Ascending aorta (tissue), 2 donors: ENCODE measurements at regions of chr10 and their contacts with region 1.

Region 1: DNA sequence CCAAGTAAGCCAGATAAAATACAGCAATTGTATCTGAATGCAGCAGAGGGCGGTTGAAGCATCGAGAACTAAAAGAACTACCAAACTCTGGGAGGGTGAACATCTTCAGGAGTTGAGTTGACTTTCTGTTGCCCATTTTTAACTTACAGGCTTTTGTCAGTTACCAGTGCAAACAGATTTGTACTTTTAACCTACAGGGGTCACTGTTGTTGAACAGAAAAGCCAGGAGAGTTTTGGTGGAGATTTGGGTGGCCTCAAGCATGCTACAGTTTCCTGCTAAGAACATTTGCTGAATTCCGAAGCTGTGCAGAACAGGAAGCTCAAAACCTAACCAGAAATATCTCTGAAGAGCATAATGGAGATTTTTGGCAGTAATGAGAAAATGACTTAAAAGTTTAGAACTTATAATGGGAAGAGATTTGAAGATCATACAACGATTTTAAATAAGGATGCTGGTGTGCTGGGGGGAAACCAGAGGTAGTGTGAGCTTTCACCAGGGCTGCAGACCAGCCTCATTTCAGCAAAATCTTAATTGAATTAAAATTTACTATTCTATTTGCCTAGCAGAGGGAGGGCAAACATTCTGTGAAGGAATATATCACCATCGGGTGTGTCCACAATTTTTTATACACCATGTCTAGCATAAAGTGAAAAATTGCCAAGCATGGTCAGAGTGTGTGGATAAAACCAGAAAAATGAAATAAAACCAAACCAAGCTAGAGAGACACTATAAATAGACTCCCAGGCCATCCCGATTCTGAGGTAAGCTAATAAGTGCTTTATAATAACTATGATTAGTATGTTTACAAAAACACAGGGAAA is 208.6 kb upstream of the CCDC6 start:
- DNase-seq: no peak
- H3K4me3 ChIP-seq: no peak overlapping the region
- H3K27ac ChIP-seq: no peak overlapping the region
- H3K4me1 ChIP-seq: peaks cover 0 to 4% of the 10 kb centered on the region in 2 donors
- H3K27me3 ChIP-seq: no peaks in the 10 kb centered on the region
- CTCF ChIP-seq: peak; percentile 33 to 63 (median 43)

Region 2: GRCh38 chr10:59991661-59992060 is 123.3 kb before region 1 on chr10:
- intact Hi-C with region 1: no loop called
- DNase-seq: peak in 1 of 2 donors; percentile 11
- H3K4me3 ChIP-seq: no peak overlapping the region
- H3K27ac ChIP-seq: no peak overlapping the region
- H3K4me1 ChIP-seq: no peaks in the 10 kb centered on the region
- H3K27me3 ChIP-seq: no peaks in the 10 kb centered on the region
- CTCF ChIP-seq: no peak

Region 3: DNA sequence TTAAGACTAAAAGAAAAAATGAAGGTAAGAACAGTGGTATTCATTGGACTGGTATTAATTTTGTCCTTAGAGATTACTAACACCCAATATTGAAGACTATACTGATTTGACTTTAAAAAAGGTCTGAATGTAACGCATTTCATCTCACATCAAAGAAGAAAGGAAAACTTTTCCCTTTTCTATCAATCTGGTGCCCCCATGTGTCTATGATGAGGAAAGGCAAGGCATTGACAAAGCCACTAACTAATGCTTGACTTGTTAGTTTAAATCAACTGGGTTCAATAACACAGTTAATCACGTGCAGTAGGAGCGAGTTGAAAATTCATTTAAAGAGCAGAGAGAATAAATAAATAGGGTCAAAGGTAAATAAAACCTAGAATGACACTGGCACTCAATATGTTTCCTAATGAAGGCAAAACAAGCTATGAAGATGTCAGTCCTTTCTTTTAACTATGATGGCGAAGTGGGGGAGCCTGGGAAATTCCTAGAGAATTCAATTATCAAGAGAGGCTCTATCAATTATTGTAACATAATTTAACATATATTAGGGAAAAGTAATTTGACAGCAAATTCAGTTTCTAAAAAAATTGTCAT is 93.8 kb after region 1 on chr10:
- intact Hi-C with region 1: loop called (anchors 1 kb)
- DNase-seq: no peak
- H3K4me3 ChIP-seq: no peak overlapping the region
- H3K27ac ChIP-seq: no peak overlapping the region
- H3K4me1 ChIP-seq: peaks cover 0 to 11% of the 10 kb centered on the region in 2 donors
- H3K27me3 ChIP-seq: no peaks in the 10 kb centered on the region
- CTCF ChIP-seq: peak; percentile 61 to 84 (median 77)

Region 4: GRCh38 chr10:60299961-60300883 is 185.2 kb after region 1 on chr10:
- intact Hi-C with region 1: loop called (anchors 10 kb)
- DNase-seq: no peak
- H3K4me3 ChIP-seq: peak overlapping the region in 1 of 2 donors; percentile 48
- H3K27ac ChIP-seq: peak overlapping the region in 1 of 2 donors; percentile 31
- H3K4me1 ChIP-seq: no peaks in the 10 kb centered on the region
- H3K27me3 ChIP-seq: no peaks in the 10 kb centered on the region
- CTCF ChIP-seq: no peak

Region 5: DNA sequence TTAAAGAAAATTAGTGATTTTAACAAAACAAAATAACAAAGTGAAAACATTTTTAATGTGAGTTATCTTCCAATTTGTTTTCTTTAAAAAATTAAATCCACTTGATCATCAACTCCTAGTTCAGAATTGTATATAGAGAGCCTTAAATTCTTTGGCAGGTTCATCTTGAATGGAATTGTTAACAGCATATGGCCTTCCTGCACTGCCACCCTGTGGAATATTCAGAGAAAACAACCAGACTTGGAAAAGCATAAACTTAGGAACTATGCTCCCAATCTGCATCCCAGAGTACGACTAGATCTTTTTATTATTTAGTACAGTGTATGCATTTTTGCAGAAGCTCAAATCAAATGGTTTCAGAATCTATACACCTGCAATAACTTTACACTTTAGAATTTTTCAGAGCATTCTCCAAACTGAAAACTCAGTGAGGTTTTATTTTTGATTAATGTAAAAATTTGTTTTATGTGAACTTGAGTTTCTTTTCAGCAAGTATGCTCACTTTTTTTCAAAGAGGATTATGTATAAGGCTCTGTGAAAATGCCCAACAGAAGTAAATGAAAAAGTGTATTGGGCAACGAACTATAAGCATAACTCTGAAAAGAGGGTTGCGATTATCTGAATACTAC is 319.6 kb after region 1 on chr10:
- intact Hi-C with region 1: loop called (anchors 5 kb)
- DNase-seq: no peak
- H3K4me3 ChIP-seq: no peak overlapping the region
- H3K27ac ChIP-seq: no peak overlapping the region
- H3K4me1 ChIP-seq: peaks cover 0 to under 1% of the 10 kb centered on the region in 2 donors
- H3K27me3 ChIP-seq: no peaks in the 10 kb centered on the region
- CTCF ChIP-seq: peak; percentile 65 to 75 (median 70)